ENCODE measurements at regions of chr17 and their contacts with region 1.

Region 1: DNA sequence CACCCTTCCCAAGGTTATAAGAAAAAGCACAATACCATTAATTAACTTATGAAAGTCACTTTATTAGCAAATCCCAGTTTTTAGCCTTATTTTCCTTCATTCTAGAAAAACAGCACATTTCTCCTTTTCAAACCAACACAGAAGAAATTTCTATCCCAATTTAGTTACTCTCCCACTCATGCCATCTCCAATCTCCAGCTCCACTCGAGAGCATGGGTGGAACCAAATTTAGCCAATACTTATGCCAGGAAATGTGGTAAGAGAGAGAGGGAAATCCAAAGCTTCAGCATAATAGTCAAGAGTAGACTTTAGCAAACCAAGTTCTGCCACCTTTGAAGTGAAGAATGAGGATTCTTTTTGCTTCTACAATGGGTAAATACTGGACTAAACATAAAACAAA is 288.8 kb downstream of the KIF2B start:
- DNase-seq: no peak
- ATAC-seq: no peak
- H3K4me3 ChIP-seq: no peak overlapping the region
- H3K4me1 ChIP-seq: no peaks in the 10 kb centered on the region
- CTCF ChIP-seq: no peak

Region 2: GRCh38 chr17:54063639-54064038 is 47.9 kb before region 1 on chr17:
- intact Hi-C with region 1: loop called in 1 of 2 experiments (anchors 10 kb)
- DNase-seq: no peak
- ATAC-seq: no peak
- H3K4me3 ChIP-seq: no peak overlapping the region
- H3K4me1 ChIP-seq: no peaks in the 10 kb centered on the region
- CTCF ChIP-seq: no peak